Right lobe of liver (tissue), 6 donors: ENCODE measurements at regions of chr15 and their contacts with region 1.

Region 1: GRCh38 chr15:50182219-50183013 is 420 bp downstream of the SLC27A2 start:
- DNase-seq: peak in 2 of 3 donors; percentile 43 to 62
- ATAC-seq: peak; percentile 18 to 41 (median 19)
- H3K4me3 ChIP-seq: peak overlapping the region; percentile 70 to 84 (median 77)
- H3K27ac ChIP-seq: peak overlapping the region; percentile 81 to 93 (median 91)
- H3K4me1 ChIP-seq: peaks cover 0 to 26% (median 11%) of the 10 kb centered on the region in 4 donors
- H3K27me3 ChIP-seq: no peaks in the 10 kb centered on the region
- CTCF ChIP-seq: no peak
- POLR2A ChIP-seq: peak; percentile 64

Region 2: DNA sequence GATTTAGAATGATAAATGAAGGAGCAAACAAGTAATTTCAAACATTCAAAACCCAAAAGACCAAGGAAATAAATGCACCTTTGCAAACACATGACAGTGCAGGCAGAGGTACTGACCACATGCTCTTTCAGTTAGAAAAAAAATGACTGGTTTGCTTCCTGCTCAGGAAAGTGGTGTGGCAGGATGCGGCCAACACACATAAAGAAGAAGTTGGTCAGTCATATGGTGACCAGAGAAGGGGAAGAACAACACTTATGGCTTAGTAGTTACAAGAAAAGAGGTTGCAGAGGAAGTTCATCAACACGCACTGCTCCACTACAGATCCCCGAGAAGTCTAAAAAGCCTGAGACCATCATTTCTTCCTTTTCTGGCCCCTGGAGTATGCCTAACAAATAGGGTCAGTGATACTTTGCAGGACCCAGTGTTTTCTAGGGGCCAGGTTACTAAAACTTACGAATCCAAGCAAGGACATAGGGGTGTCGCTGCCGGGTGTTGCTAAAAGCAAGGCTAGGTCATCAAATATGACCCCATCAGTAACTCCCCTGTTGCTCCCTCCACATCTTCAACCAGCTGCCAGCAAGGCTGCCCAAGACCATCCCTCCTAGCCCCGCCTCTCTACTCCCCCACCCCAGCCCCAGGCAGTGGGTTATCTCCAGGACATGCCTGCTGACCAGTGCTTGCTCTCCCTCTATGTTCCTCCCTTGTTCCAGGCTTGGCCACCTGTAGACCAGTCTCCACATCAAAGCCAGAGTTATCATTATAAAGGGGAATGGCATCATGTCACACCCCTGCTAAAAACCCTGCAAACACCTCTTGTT is 74.6 kb before region 1 on chr15:
- intact Hi-C with region 1: no loop called
- DNase-seq: no peak
- ATAC-seq: peak; percentile 64 to 69 (median 66)
- H3K4me3 ChIP-seq: no peak overlapping the region
- H3K27ac ChIP-seq: peak overlapping the region in 1 of 3 donors; percentile 6
- H3K4me1 ChIP-seq: peaks cover 0 to 12% (median 0%) of the 10 kb centered on the region in 4 donors
- H3K27me3 ChIP-seq: no peaks in the 10 kb centered on the region
- CTCF ChIP-seq: no peak
- POLR2A ChIP-seq: no peak

Region 3: GRCh38 chr15:50134520-50135024 is 47.8 kb before region 1 on chr15:
- intact Hi-C with region 1: no loop called
- DNase-seq: no peak
- ATAC-seq: peak; percentile 23 to 70 (median 47)
- H3K4me3 ChIP-seq: no peak overlapping the region
- H3K27ac ChIP-seq: no peak overlapping the region
- H3K4me1 ChIP-seq: no peaks in the 10 kb centered on the region
- H3K27me3 ChIP-seq: no peaks in the 10 kb centered on the region
- CTCF ChIP-seq: no peak
- POLR2A ChIP-seq: no peak

Region 4: DNA sequence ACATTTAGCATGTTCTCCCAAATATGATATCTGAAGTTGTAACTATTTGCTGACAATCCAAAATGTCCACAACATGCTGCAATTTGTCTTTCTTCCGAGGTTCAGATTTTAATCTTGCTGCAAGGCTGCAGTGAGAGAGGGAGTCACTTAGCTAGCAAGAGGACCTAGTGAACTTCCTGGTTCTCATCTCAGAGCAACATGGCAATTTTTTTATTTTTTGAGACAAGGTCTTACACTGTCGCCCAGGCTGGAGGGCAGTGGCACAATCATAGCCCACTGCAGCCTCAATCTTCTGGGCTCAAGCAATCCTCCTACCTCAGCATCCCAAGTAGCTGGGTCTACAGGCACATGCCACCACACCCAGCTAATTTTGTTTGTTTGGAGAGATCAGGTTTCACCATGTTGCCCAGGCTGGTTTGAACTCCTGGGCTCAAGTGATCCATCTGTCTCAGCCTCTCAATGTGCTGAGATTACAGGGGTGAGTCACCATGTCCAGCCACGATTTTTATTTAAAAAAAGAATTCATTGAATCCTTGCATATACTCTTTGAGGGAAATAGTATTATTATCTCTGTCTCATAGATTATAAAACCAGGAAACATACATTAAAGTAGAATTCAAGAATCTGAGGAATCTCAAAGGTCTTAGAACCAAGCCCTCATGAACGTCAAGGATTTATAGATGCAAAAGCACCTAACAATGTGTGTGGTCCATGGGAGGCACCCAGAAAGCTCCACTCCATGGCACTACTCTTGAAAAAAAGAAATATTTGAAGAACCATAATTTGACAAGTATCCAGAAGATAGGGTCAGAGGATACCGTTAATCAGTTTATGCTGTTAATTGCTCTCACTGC is 74.0 kb after region 1 on chr15:
- intact Hi-C with region 1: loop called in 1 of 2 experiments (anchors 10 kb)
- DNase-seq: no peak
- ATAC-seq: no peak
- H3K4me3 ChIP-seq: no peak overlapping the region
- H3K27ac ChIP-seq: no peak overlapping the region
- H3K4me1 ChIP-seq: peaks cover 0 to 8% (median 0%) of the 10 kb centered on the region in 4 donors
- H3K27me3 ChIP-seq: no peaks in the 10 kb centered on the region
- CTCF ChIP-seq: no peak
- POLR2A ChIP-seq: no peak